B cell (primary cell): ENCODE measurements at regions of chr19 and their contacts with region 1.

Region 1: DNA sequence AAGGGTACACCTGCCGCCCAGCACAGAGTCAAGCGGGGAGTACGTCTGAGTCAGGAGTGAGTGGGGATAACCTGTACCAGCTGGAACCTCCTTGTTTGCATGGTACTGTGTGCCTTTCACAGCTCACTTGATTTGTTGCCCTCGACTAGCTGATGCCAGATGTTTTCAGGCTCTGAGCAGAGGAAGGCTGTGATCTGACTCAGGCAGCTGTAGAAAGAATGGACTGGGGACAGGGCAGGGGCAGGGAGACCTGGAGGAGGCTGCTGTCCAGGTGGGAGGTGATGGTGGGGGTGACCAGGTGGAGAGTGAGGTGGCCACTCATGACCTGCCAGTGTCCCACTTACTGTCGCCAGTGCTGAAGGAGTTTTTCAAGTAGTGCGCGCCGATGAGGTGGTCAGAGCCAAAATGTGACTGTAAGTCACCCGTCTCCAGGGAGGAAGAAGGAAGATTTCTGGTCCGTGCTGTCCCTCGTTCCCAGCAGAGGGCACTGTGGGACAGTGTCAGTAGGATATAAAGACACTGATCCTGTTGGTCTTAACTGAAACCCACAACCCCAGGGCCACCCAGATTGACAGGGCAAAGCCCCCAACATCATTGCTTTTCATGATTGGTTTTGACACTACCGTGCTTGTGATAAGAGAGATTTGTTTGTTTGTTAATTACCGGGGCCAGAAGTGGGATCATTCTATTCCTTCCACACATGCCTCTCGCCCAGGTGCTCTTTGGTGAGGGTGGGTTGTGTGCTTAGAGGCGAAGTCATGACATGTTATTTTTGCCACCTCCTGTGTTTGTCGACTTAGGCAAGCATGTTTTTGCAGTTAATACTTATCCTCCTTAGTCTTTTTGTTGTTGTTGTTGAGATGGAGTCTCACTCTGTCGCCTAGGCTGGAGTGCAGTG is 128.4 kb downstream of the DPF1 start:
- DNase-seq: peak; percentile 78
- ATAC-seq: peak; percentile 81
- H3K4me3 ChIP-seq: no peak overlapping the region
- H3K4me3 Mint-ChIP-seq: peak overlapping the region; percentile 11
- H3K27ac ChIP-seq: peak overlapping the region; percentile 18 to 69
- H3K27ac Mint-ChIP-seq: peak overlapping the region; percentile 90
- H3K4me1 ChIP-seq: peaks cover 7 to 12% of the 10 kb centered on the region in 2 donors
- H3K4me1 Mint-ChIP-seq: peaks cover 21% of the 10 kb centered on the region
- H3K27me3 ChIP-seq: no peaks in the 10 kb centered on the region
- H3K27me3 Mint-ChIP-seq: no peaks in the 10 kb centered on the region
- CTCF ChIP-seq: peak; percentile 73

Region 2: DNA sequence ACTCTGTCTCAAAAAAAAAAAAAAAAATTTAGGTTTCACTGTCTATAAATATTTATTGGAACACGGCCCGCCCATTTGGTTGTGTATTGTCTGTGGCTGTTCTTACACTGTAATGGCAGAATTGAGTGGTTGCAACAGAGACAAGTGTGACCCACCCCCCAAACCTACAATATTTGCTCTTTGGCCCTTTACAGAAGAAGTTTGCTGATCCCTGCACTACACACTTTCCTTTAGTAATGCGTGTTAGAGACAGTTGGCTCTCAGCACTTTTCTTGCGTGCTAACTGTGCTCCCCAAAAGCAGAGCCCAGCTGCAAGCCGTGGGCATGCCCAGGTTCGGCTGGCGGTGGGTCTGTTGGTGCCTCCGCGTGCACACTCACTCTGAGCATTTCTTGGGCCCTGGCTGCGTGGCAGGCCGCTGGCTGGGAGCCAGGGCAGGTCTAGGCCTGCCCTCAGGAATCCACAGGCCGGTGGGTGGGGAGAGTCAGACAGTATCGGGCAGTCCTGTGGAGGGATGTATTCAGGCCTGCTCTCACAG is 116.0 kb before region 1 on chr19:
- CTCF ChIA-PET with region 1: interaction called, 11 read pairs
- POLR2A ChIA-PET with region 1: no interaction called
- intact Hi-C with region 1: loop called (anchors 5 kb)
- DNase-seq: peak; percentile 66
- ATAC-seq: no peak
- H3K4me3 ChIP-seq: peak overlapping the region in 2 of 5 experiments; percentile 19 to 45
- H3K4me3 Mint-ChIP-seq: peak overlapping the region; percentile 65
- H3K27ac ChIP-seq: peak overlapping the region; percentile 89 to 92
- H3K27ac Mint-ChIP-seq: peak overlapping the region; percentile 94
- H3K4me1 ChIP-seq: peaks cover 79 to 99% of the 10 kb centered on the region in 2 donors
- H3K4me1 Mint-ChIP-seq: peaks cover 87% of the 10 kb centered on the region
- H3K27me3 ChIP-seq: no peaks in the 10 kb centered on the region
- H3K27me3 Mint-ChIP-seq: no peaks in the 10 kb centered on the region
- CTCF ChIP-seq: no peak

Region 3: GRCh38 chr19:38033658-38034498 is 61.8 kb before region 1 on chr19:
- CTCF ChIA-PET with region 1: interaction called, 11 read pairs
- POLR2A ChIA-PET with region 1: interaction called, 4 read pairs
- intact Hi-C with region 1: no loop called
- DNase-seq: peak; percentile 93
- ATAC-seq: peak; percentile 79
- H3K4me3 ChIP-seq: peak overlapping the region in 3 of 5 experiments; percentile 16 to 43 (median 36)
- H3K4me3 Mint-ChIP-seq: peak overlapping the region; percentile 86
- H3K27ac ChIP-seq: peak overlapping the region; percentile 84 to 93
- H3K27ac Mint-ChIP-seq: peak overlapping the region; percentile 99
- H3K4me1 ChIP-seq: peaks cover 63 to 87% of the 10 kb centered on the region in 2 donors
- H3K4me1 Mint-ChIP-seq: peaks cover 81% of the 10 kb centered on the region
- H3K27me3 ChIP-seq: no peaks in the 10 kb centered on the region
- H3K27me3 Mint-ChIP-seq: no peaks in the 10 kb centered on the region
- CTCF ChIP-seq: peak; percentile 65

Region 4: DNA sequence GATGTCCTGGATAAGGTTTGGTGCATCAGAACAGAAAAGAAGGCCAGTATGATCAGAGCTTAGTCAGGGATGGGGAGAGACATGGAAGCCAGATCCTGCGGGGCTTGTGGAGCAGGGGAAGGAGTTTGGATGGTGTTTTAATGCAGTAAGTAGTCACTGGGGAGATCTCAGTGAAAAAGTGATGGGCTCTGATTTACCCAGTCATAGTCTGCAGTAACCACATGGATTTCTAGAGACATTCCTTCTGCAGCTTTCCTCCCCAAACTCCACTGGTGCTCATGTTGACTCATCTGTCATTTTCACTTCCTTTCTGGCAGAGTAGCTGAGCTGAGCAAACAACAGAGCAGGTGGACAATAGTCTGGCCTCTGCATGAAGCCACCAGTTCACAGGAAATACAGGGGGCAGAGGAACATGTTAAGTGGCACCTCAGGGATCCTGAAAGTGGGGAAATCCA is 15.7 kb before region 1 on chr19:
- CTCF ChIA-PET with region 1: interaction called, 16 read pairs
- POLR2A ChIA-PET with region 1: interaction called, 4 read pairs
- intact Hi-C with region 1: no loop called
- DNase-seq: peak; percentile 48
- ATAC-seq: peak; percentile 83
- H3K4me3 ChIP-seq: no peak overlapping the region
- H3K4me3 Mint-ChIP-seq: peak overlapping the region; percentile 33
- H3K27ac ChIP-seq: peak overlapping the region; percentile 41 to 64
- H3K27ac Mint-ChIP-seq: peak overlapping the region; percentile 88
- H3K4me1 ChIP-seq: peaks cover 18 to 23% of the 10 kb centered on the region in 2 donors
- H3K4me1 Mint-ChIP-seq: peaks cover 22% of the 10 kb centered on the region
- H3K27me3 ChIP-seq: no peaks in the 10 kb centered on the region
- H3K27me3 Mint-ChIP-seq: no peaks in the 10 kb centered on the region
- CTCF ChIP-seq: no peak